Activated CD8-positive, alpha-beta T cell treated with anti-CD3 and anti-CD28 coated beads for 36 hours (primary cell): ENCODE measurements at regions of chr1 and their contacts with region 1.

Region 1: DNA sequence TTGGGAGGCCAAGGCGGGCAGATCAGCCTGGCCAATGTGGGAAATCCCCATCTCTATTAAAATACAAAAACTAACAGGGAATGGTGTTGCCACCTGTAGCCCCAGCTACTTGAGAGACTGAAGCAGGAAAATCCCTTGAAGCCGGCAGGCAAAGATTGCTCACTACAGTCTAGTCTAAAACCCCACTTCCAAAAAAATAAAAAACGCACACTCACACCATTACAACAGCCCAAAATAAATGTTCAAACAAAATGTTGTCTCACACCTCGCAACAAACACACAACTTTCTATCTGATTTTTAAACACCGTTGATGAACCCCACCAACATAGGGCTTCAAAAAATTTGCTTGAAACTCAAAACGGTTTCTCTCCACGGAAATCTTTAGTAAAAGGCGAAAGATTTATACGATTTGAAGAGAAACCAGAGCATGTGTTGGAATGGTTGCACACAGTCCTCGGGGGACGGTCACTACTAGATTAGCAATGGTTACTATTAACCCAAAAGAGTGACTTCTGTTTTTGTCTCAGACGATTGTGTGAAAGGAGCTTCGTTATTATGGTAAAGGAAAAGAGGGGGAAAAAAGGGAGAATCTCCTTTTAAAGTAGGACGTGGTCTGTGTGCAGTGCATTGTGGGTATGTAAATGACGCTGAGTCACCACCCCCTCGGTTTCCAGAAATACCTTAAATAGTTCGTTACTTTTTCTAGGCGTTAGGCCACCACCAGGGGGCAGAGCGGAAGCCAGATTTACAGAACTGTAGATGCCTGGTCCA is at the start of gene RNU5D-1:
- DNase-seq: peak; percentile 99
- ATAC-seq: peak; percentile 84
- H3K4me3 Mint-ChIP-seq: peak within 1 kb of the TSS; percentile 61
- H3K27ac Mint-ChIP-seq: peak within 1 kb of the TSS; percentile 100
- H3K4me1 Mint-ChIP-seq: peaks cover 38% of the 10 kb centered on the region
- H3K27me3 Mint-ChIP-seq: peaks cover 2% of the 10 kb centered on the region
- CTCF ChIP-seq: peak; percentile 93
- total RNA-seq, gene RNU5D-1: not detected

Region 2: DNA sequence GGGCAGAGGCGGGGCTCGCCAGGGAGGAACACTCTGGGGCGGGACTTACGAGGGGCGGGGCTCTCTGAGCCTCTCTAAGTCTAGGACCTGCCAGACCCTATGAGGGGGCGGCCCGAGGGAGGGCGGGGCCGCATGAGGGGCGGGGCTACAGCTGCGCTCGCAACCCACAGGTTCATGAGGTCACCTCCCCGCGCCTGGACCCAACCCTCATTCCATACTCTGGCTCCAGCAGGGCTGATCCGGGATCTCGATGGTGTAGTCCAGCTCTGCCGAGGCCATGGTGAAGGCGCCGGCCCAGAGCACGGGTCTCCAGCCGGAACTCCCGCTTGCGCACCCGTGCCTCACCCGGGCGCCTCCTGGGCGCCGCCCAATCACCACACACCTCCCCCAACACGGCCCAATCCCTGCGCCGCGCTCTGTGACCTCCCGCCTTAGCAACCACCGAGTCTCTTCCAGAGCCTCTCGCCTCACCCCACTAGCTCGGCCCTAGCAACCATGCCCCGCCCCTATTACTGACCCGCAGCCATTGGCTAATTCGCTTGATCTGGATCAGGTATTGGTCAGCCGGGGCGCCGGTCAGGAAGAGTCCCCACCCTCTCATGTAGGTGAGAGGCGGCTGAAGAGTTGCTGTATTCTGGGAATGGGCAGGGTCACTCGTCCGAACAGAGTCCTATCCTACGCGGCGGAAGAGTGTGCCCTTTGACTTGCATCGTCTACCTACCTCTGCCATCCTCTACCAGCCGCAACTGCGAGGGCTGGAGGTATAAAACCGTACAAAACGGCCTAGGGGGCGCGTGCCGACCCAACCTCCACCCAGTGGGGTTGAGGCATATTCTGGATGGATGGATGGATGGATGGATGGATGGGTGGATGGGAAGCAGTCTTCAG is 56.6 kb before region 1 on chr1 and contains the starts of genes ARMH1 and TMEM53:
- CTCF ChIA-PET with region 1: no interaction called
- POLR2A ChIA-PET with region 1: interaction called, 14 read pairs
- intact Hi-C with region 1: no loop called
- DNase-seq: peak; percentile 99
- ATAC-seq: peak; percentile 95
- H3K4me3 Mint-ChIP-seq: peak within 1 kb of the TSS; percentile 81
- H3K27ac Mint-ChIP-seq: peak within 1 kb of the TSS; percentile 89
- H3K4me1 Mint-ChIP-seq: peaks cover 20% of the 10 kb centered on the region
- H3K27me3 Mint-ChIP-seq: no peaks in the 10 kb centered on the region
- CTCF ChIP-seq: no peak
- total RNA-seq, gene ARMH1: 162 to 165 TPM
- total RNA-seq, gene TMEM53: 2.3 to 3.5 TPM

Region 3: DNA sequence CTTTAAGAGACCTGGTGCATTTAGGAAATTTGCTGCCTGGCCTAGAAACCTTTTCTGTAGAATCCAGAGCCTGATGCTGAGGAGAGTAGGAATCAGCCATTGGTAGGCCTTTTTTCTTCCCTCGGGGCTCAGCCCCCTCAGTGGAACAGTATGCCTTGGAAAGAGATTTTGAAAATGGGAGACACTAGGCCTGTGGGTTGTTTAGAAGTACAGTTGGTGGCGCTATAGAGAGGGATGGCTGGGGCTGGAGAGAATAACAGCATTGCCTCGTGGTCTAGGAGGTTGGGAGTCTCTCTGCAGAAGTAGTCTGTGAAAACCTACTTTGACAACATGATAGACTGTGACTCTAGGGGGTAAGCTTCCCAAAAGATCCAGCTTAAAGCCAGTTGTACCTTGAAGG is 17.0 kb after region 1 on chr1:
- CTCF ChIA-PET with region 1: interaction called, 11 read pairs
- POLR2A ChIA-PET with region 1: interaction called, 137 read pairs
- intact Hi-C with region 1: no loop called
- DNase-seq: no peak
- ATAC-seq: no peak
- H3K4me3 Mint-ChIP-seq: no peak overlapping the region
- H3K27ac Mint-ChIP-seq: no peak overlapping the region
- H3K4me1 Mint-ChIP-seq: peaks cover 12% of the 10 kb centered on the region
- H3K27me3 Mint-ChIP-seq: no peaks in the 10 kb centered on the region
- CTCF ChIP-seq: no peak

Region 4: GRCh38 chr1:44786138-44786840 is 55.4 kb after region 1 on chr1:
- CTCF ChIA-PET with region 1: interaction called, 5 read pairs
- POLR2A ChIA-PET with region 1: interaction called, 108 read pairs
- intact Hi-C with region 1: no loop called
- DNase-seq: peak; percentile 78
- ATAC-seq: peak; percentile 69
- H3K4me3 Mint-ChIP-seq: peak overlapping the region; percentile 65
- H3K27ac Mint-ChIP-seq: peak overlapping the region; percentile 82
- H3K4me1 Mint-ChIP-seq: peaks cover 33% of the 10 kb centered on the region
- H3K27me3 Mint-ChIP-seq: no peaks in the 10 kb centered on the region
- CTCF ChIP-seq: peak; percentile 100

Region 5: GRCh38 chr1:44807262-44808062 is 76.5 kb after region 1 on chr1 and contains the start of gene DYNLT4:
- CTCF ChIA-PET with region 1: interaction called, 22 read pairs
- POLR2A ChIA-PET with region 1: interaction called, 213 read pairs
- intact Hi-C with region 1: loop called (anchors 2 kb)
- DNase-seq: peak; percentile 97
- ATAC-seq: peak; percentile 59
- H3K4me3 Mint-ChIP-seq: peak within 1 kb of the TSS; percentile 55
- H3K27ac Mint-ChIP-seq: peak within 1 kb of the TSS; percentile 99
- H3K4me1 Mint-ChIP-seq: peaks cover 89% of the 10 kb centered on the region
- H3K27me3 Mint-ChIP-seq: no peaks in the 10 kb centered on the region
- CTCF ChIP-seq: no peak
- total RNA-seq, gene DYNLT4: 0.36 to 1.1 TPM